ENCODE measurements at regions of chr6 and their contacts with region 1.

Region 1: DNA sequence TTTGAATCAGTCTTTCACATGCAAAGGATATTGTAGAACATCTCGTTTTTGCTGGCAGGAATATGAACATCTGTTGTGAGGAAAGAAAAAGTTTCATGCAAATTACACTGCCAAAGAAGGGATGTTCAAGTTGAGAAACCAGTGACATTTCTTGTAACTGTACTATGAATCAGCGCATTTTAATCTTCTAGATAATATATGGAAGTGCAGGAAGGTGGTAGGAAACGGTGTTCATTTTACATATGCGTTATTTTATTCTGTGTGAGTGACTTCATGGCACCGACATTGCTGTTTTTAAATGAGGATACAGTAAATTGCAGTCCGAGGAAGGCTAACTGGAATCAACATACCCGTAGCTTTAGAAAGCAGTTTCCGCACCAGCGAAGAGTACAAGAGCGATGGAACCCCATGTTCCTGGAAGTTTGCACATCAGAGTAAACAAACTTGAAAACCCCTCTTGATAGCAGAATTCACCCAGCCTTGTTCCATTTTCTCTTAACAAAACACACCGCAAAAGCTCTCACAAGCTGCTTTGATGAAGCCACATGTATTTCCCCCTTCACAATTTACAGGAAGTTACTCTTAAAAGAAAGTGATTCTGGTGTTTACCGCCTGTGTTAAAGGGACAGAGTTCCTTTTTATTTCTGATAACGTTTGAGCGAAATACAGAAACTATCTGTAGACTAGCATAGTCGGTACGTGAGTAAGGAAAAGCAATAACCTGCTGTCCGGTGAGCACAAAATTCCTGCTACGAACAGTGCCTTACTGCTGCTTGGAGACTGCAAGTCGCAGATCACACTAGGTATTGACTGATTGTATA is 11.5 kb downstream of the PRDM1 start:
- DNase-seq: peak; percentile 61
- H3K4me3 Mint-ChIP-seq: peak overlapping the region; percentile 95
- H3K27ac Mint-ChIP-seq: peak overlapping the region; percentile 98
- H3K4me1 Mint-ChIP-seq: peaks cover 69% of the 10 kb centered on the region
- H3K27me3 Mint-ChIP-seq: no peaks in the 10 kb centered on the region

Region 2: DNA sequence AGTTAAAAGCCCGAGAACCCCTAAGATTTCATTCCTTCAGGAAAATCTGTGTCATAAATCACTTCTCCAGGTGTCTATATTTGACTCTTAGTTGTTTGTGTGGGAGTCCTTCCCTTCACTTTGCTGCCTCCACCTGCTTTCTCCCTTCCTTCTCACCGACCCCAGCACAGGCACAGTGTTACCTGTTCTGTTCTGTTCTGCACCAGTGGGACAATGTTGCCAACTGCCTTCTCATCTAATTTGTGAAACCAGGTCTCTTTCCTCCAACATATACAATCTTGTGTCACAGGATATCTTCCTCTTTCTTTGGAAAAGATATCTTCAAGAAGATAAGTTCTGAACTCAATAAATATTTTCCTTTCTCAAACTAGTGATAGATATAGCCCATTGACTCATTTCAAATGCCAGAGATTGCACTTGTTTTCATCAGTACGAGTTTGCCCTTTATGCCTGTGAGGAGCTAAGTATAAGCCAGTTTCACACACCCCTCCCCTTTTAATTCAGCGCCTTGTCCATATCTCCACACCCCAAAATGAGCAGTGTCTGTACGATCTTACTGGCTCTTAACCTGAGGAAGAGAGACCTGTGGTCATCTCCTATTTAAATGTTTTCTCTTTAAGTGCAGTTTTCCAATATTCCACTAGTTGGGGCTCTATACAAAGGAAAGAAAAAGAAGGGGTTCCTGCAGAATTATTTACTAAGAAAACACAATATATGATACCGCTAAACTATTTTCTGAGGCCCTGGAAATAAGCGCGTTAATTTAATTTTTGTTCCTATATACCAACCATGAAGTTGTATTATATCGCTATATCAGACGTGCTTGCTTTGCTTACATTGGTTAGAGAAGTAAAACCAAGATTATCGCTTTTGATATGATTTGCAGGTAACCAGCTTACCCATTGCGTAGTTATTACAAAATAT is 613.1 kb before region 1 on chr6:
- intact Hi-C with region 1: loop called (anchors 5 kb)
- DNase-seq: no peak
- H3K4me3 Mint-ChIP-seq: peak overlapping the region; percentile 14
- H3K27ac Mint-ChIP-seq: peak overlapping the region; percentile 58
- H3K4me1 Mint-ChIP-seq: peaks cover 58% of the 10 kb centered on the region
- H3K27me3 Mint-ChIP-seq: no peaks in the 10 kb centered on the region

Region 3: DNA sequence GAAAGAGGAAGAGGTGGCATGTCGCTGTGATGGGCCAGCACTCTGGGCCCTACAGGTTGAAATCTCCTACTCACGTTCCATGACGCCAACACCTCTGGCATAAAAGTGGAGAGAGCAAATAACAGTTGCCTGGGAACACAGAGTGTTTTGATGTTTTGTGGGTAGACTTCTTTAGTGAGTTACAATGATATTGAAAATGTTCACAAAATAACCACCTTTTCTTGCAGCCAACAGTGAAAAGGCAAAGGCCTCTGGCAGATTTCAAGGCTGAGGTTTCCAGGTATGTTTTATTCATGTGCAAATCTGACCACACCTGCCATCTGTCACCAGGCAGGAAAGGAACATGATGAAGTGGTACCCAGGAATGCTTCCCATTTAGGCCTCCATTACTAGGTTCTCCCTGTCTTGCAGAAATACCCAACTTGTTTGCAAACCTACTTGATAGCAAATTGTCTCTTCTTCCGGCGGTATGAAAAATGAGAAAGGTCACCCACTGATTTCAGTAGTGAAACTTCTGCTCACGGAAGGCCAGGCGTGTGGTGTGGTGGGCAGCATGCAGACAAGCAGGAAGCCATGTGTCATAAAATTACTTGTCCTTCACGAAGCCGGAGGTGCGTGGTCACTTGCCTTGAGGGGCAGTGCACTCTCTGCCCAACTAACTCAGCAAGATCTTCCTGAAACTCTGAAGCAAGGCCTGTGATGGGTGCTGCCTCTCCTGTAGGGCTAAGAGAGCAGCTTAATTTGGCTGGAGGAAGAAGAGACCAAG is 310.5 kb before region 1 on chr6:
- intact Hi-C with region 1: loop called (anchors 2 kb)
- DNase-seq: peak; percentile 36
- H3K4me3 Mint-ChIP-seq: no peak overlapping the region
- H3K27ac Mint-ChIP-seq: peak overlapping the region; percentile 44
- H3K4me1 Mint-ChIP-seq: peaks cover 75% of the 10 kb centered on the region
- H3K27me3 Mint-ChIP-seq: no peaks in the 10 kb centered on the region

Region 4: DNA sequence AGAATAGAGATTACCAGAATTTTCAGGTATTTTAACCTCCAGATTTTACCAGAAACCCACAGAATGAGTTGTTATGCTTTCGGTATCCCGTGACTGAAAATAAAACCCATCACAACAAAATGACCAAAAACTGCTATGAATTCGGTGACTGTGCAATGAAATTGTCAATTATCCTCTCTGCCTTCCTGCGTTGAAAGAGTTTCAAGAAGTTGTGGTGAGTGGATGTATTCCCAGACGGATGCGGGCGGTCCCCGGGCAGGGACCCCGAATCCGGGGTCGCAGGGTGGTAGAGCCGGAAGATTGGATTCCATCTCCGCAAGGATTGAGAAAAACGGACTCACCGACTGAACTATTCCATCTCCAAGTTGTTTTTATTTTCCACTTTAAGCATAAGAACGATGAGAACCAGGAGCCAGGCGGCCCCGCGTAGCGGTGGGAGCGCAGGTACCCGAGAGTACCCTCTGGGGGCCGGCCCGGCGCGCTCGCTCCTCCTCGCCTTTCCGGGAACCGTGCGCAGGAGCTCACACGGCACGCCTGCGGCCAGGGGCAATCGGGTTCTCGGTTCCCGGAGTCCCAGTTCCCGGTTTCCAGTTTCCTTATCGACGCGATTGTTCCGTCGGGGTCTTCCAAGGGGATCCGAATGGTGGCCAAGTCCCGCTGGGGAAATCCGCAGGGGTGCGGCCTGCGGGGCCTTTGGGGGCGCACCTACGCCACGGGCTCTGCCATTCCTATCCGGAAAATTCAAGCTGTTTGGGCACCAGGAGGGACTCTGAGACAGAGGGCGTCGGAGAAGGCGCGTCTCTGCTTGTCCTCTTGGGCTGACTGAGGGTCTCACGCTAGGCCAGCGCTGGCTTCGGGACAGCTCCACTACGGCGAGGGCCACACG is 116.4 kb before region 1 on chr6:
- intact Hi-C with region 1: loop called (anchors 1 kb)
- DNase-seq: peak; percentile 36
- H3K4me3 Mint-ChIP-seq: peak overlapping the region; percentile 74
- H3K27ac Mint-ChIP-seq: peak overlapping the region; percentile 85
- H3K4me1 Mint-ChIP-seq: peaks cover 56% of the 10 kb centered on the region
- H3K27me3 Mint-ChIP-seq: peaks cover 3% of the 10 kb centered on the region

Region 5: GRCh38 chr6:106114492-106115265 is 17.1 kb after region 1 on chr6:
- intact Hi-C with region 1: loop called (anchors 1 kb)
- DNase-seq: peak; percentile 55
- H3K4me3 Mint-ChIP-seq: peak overlapping the region; percentile 31
- H3K27ac Mint-ChIP-seq: peak overlapping the region; percentile 78
- H3K4me1 Mint-ChIP-seq: peaks cover 89% of the 10 kb centered on the region
- H3K27me3 Mint-ChIP-seq: no peaks in the 10 kb centered on the region

Region 6: DNA sequence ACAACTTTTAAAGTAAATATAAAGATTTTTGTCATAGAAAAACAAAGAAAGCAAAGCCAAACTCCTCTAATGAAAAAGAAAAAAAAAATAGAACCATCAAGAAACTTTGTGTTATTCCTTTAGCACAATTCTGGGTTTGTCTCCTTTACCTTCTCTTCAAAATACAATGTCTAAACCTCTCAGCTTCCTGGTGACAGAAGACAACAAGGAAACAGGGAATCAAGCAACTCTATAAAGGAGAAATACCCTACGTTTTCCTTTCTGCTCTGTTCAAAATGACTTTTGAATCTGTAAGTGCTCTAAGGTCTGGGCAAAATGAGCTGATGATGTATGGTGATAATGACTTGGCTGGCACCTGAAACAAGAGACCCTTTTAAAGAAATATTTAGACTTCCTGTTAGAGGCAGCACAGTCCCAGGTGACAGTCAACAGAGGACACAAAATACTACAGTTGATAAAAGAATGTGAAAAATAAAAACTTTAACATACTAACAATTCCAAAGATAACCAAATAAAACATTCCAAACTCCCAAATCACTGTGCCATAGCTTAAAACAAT is 89.9 kb after region 1 on chr6:
- intact Hi-C with region 1: loop called (anchors 1 kb)
- DNase-seq: no peak
- H3K4me3 Mint-ChIP-seq: peak overlapping the region; percentile 48
- H3K27ac Mint-ChIP-seq: peak overlapping the region; percentile 86
- H3K4me1 Mint-ChIP-seq: peaks cover 68% of the 10 kb centered on the region
- H3K27me3 Mint-ChIP-seq: no peaks in the 10 kb centered on the region

Region 7: GRCh38 chr6:106309766-106310373 is 212.2 kb after region 1 on chr6:
- intact Hi-C with region 1: loop called (anchors 1 kb)
- DNase-seq: no peak
- H3K4me3 Mint-ChIP-seq: no peak overlapping the region
- H3K27ac Mint-ChIP-seq: no peak overlapping the region
- H3K4me1 Mint-ChIP-seq: peaks cover 37% of the 10 kb centered on the region
- H3K27me3 Mint-ChIP-seq: no peaks in the 10 kb centered on the region

Measured in activated T-helper 2 cell treated with anti-CD3 and anti-CD28 coated beads, Interferon-gamma antibody, Interleukin-2, Interleukin-4, amounts not matched to agents 10 μg/mL and 5 μg/mL and 100 μg/mL, durations not matched to agents 14 hours and 24 hours and 36 hours (primary cell).